Prostate gland (tissue), 2 donors: ENCODE measurements at regions of chr18 and their contacts with region 1.

Region 1: DNA sequence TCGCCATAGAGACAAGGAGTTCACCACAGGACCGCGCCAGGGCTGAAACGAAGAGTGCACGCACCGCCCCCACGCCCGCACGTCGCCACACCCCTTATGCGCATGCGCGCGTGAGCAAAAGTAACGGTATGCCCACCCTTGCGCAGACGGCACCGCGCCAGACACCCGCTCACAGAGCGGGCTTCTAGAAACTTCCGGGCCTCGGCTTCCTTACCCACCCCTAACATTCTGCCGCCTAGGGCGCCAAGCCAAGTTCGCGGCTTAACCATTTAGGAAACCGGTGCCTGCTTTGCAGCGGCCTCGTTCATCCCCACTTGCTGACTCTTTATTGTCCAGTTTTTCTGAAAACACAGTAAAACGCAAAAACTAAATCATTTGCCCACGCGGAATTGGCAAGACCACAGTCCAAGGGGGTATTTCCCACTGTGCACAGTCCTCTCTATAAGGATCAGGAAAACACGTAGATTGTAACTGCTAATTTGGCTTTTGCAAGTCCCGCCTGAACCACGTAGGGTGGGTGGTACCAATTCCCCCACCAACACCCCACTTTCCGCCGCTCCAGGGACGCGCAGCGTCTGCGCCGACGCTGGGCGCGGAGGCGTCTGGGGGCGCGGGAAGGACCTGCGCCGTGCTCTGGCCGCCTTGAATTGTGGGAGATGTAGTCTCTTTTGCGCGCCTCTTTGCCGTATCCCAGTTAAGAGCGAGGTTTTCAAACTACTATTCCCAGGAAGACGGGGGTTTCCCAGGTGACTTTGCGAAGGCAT is at the starts of genes FBXO15 and TIMM21:
- DNase-seq: peak; percentile 91
- H3K4me3 ChIP-seq: peak within 1 kb of the TSS; percentile 56
- H3K27ac ChIP-seq: peak within 1 kb of the TSS; percentile 83 to 88
- H3K4me1 ChIP-seq: peaks cover 2% of the 10 kb centered on the region
- H3K27me3 ChIP-seq: no peaks in the 10 kb centered on the region
- CTCF ChIP-seq: peak in 2 of 4 experiments; percentile 12 to 31
- POLR2A ChIP-seq: peak; percentile 33
- total RNA-seq, gene FBXO15: 4.2 to 7.8 TPM
- total RNA-seq, gene TIMM21: 27.6 to 33.1 TPM

Region 2: DNA sequence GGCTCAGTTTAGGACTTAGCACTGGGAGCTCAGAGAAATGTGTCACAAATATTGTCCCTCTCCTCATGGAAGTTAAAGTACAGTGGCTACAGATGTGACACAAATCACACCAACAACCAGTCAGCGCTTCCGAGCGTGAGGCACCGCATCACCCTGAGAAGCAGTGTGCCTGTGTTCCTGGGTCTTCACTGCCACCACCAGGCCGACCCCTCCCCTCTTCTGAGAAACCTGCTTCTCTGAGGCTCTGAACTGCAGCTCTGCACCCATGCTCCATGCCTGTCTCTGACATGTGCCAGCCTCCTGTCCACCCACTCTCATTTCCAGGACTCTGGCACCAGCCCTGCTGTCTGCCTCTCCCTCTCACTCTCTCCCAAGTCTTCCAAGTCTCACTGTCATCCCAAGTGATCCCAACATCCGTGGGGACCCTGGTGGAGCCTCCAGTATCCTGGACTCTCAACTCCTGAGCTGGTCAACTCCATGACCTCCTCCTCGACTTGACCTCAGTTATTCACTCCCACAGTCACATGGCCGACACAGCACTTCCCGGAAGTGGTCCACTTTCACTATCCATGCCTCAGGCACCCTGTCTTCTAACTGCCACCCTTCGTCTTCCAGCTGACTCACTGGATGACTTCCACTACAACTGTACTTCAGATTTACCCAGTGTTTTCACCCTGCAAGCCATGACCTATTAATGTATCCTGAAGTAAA is 73.8 kb before region 1 on chr18:
- intact Hi-C with region 1: no loop called
- DNase-seq: no peak
- H3K4me3 ChIP-seq: no peak overlapping the region
- H3K27ac ChIP-seq: no peak overlapping the region
- H3K4me1 ChIP-seq: no peaks in the 10 kb centered on the region
- H3K27me3 ChIP-seq: no peaks in the 10 kb centered on the region
- CTCF ChIP-seq: no peak
- POLR2A ChIP-seq: no peak

Region 3: DNA sequence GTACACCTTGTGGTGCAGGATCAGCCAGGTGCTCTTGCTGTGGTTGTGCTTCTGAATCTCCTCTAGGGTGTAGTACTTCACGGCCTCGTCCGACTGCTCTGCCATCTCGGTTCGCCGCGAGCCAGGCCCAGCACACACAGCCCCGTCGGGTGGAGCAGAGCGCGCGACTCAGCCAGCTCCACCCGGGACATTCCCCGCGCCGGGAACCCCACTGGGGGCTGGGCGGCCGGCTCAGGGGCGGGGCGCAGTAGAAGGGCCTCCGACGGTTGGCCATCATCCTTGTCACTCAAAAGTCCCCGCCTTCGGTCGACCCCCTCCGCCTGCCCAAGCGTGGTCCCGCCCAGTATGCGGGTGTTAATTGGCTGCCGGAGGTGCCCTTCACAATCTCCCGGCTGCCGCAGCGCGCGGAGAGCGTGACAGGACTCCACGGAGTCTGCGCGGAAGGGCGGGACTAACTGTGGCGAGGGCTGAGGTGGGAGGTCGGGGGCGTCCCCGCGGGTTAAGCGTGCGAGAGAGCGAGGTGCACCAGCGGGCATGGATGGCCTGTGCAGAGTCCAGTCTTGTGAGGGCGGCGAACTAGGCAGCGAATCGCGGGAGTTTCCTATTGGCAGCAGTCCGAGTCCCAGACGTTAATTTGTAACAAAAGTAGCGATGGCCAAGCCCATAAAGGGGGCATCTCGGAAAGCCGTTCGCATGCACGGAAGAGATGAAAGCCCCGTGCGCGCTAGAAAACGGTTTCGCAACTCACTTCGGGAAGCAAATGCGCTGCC is 144.0 kb after region 1 on chr18 and contains the start of gene CYB5A:
- intact Hi-C with region 1: loop called (anchors 5 kb)
- DNase-seq: peak; percentile 98
- H3K4me3 ChIP-seq: peak within 1 kb of the TSS; percentile 75 to 92
- H3K27ac ChIP-seq: peak within 1 kb of the TSS; percentile 67
- H3K4me1 ChIP-seq: no peaks in the 10 kb centered on the region
- H3K27me3 ChIP-seq: no peaks in the 10 kb centered on the region
- CTCF ChIP-seq: no peak
- POLR2A ChIP-seq: peak; percentile 38
- total RNA-seq, gene CYB5A: 76.6 to 144 TPM